Esophagus squamous epithelium (tissue), 5 donors: ENCODE measurements at regions of chr15 and their contacts with region 1.

Region 1: DNA sequence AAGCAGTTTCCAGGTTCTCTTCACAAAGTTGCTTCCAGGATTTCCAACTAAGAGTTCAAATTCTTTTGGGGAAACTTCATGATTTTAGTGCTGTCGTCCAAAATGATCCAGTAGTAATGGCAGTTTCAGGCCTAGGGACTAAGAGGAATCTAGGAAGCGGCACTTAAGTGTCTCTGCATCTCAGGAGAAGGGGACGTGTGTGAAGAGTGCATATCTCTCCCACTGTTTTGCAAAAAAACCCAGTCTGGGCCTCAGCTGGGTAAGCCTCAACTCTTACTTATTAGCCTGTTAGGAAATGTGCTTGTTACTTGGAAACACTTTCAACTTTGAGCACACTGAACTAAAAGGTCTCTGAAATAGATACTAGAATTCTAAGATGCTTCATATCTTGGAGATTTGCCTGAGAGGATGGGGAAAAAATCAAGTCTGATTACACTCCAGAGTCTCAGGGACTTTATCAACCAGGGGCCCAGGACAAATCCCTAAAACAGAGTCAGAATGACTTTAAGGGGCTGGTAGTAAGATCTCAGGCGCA is 81.8 kb downstream of the WDR76 start:
- DNase-seq: no peak
- H3K4me3 ChIP-seq: no peak overlapping the region
- H3K27ac ChIP-seq: no peak overlapping the region
- H3K4me1 ChIP-seq: peaks cover 0 to 15% (median 0%) of the 10 kb centered on the region in 3 donors
- H3K27me3 ChIP-seq: peaks cover 0 to 2% (median 0%) of the 10 kb centered on the region in 4 donors
- CTCF ChIP-seq: no peak
- POLR2A ChIP-seq: no peak

Region 2: GRCh38 chr15:44064706-44065105 is 156.1 kb after region 1 on chr15:
- intact Hi-C with region 1: loop called (anchors 5 kb)
- DNase-seq: no peak
- H3K4me3 ChIP-seq: no peak overlapping the region
- H3K27ac ChIP-seq: no peak overlapping the region
- H3K4me1 ChIP-seq: no peaks in the 10 kb centered on the region
- H3K27me3 ChIP-seq: no peaks in the 10 kb centered on the region
- CTCF ChIP-seq: no peak
- POLR2A ChIP-seq: no peak